ENCODE measurements at regions of chr14 and their contacts with region 1.

Region 1: DNA sequence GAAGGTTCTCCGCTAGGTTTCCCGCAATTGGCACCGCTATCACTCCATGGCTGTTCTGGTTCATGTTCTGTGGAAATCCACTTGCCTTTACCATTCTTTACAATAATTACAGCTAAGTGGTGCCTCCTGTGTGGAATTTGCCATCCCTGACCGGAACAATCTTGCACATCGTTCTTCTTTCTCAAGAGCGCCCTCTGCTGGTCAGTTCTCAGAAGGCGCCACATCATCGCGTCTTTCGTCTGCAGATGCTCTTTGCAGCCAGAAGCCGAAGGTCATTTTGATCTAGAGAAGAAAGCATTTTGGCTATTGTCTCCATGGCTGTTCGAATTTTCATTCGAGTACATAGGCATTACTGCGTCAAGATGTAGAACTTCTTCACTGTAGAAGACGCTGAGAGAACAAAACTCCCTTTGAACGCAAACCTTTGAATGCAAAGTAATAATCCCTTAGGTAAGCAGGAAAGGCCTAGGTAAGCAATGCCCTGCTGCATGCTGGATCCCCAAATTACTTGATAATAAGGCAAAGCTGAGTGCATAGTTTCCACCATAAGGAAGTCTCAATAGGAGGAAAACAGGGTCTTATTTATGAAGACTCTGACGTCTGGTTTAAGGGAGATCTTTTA is 10.1 kb upstream of the RTRAF start:
- DNase-seq: peak in 1 of 2 experiments; percentile 68
- H3K4me3 ChIP-seq: no peak overlapping the region
- H3K27ac ChIP-seq: no peak overlapping the region
- H3K4me1 ChIP-seq: no peaks in the 10 kb centered on the region
- H3K27me3 ChIP-seq: no peaks in the 10 kb centered on the region
- CTCF ChIP-seq: peak; percentile 94

Region 2: GRCh38 chr14:50846226-50846880 is 1132.8 kb before region 1 on chr14:
- CTCF ChIA-PET with region 1: no interaction called
- POLR2A ChIA-PET with region 1: interaction called, 32 read pairs
- intact Hi-C with region 1: no loop called
- DNase-seq: no peak
- H3K4me3 ChIP-seq: no peak overlapping the region
- H3K27ac ChIP-seq: no peak overlapping the region
- H3K4me1 ChIP-seq: no peaks in the 10 kb centered on the region
- H3K27me3 ChIP-seq: no peaks in the 10 kb centered on the region
- CTCF ChIP-seq: no peak

Region 3: DNA sequence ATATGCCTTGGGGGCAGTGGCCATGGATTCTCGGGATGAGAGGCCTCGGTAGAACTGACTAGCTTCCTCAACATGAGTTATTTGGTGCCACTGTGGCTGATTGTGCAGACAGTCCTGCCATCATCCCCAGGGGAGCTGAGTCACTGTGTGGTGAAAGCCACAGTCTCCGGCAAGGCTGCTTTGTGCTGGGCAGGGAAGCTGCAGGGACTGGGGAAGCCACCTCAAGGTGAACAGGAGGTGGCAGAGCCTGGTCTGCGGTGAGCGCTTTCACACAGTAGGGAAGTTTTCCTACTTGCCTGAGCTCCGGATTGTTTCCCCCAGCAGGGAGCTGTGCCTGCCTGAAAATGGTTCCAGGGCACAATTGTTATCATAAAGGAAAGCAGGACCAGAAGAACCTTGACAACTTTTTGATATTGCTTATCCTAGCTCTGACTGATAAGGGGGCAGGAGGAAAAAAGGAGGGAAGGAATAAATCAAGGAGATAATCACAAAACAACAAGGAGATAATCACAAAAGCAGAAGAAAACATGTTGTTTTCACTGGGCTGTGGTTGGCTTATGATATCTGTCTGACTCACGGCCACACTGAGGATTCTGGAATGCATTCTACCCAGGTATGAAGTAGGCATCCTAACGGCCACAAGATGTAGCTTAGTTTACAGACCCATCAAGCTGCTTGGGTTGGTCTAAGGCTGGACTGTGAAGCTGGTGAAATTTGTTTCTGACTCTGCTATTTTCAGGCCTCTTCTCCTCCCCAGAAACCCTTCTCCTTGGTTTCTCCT is 151.0 kb before region 1 on chr14:
- CTCF ChIA-PET with region 1: interaction called, 6 read pairs
- POLR2A ChIA-PET with region 1: no interaction called
- intact Hi-C with region 1: loop called (anchors 2 kb)
- DNase-seq: peak; percentile 67 to 84
- H3K4me3 ChIP-seq: no peak overlapping the region
- H3K27ac ChIP-seq: peak overlapping the region; percentile 83
- H3K4me1 ChIP-seq: peaks cover 22% of the 10 kb centered on the region
- H3K27me3 ChIP-seq: no peaks in the 10 kb centered on the region
- CTCF ChIP-seq: no peak